Activated T-helper 1 cell treated with anti-CD3 and anti-CD28 coated beads, Interleukin-12 subunit alpha, Interleukin-12 subunit beta, Interleukin-2, Interleukin-4 antibody, amounts not matched to agents 30 ng/mL and 10 ng/mL and 1 ng/mL, durations not matched to agents 14 hours and 24 hours and 36 hours (primary cell): ENCODE measurements at regions of chr2 and their contacts with region 1.

Region 1: GRCh38 chr2:203940039-203940438 is 3.5 kb downstream of the ICOS start:
- DNase-seq: no peak
- H3K4me3 Mint-ChIP-seq: peak overlapping the region; percentile 95
- H3K27ac Mint-ChIP-seq: peak overlapping the region; percentile 93
- H3K4me1 Mint-ChIP-seq: peaks cover 69% of the 10 kb centered on the region
- H3K27me3 Mint-ChIP-seq: no peaks in the 10 kb centered on the region

Region 2: DNA sequence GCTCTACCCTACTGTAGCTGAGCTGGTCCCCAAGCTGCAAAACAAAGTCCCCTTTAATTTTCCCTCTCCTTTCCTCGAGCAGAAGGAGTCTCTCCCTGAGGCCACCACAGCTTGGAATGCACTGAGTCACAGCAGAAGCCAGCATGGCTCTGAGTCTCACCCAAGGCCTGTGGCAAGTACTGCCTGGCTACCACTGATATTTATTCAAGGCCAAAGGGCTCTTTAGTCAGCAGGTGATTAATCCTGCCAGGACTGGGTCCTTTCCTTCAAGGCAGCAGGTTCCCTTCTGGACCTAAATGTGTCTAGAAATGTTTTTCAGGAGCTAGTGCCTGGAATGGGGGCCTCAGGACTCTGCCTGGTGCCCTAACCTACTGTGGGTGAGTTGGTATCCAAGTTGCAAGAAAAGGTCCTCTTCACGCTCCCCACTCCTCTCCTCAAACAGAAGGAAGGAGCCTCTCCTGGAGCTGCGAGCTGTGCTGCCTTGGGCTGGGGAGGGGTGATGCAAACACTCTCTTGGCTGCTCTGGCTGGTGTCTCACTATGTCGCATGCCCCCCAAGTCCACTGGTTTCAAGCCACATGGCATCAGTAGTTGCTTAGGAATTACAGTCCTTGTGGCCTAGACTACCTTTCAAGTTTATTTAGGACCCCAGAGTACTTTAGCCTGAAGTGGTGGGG is 180.2 kb before region 1 on chr2:
- intact Hi-C with region 1: no loop called
- DNase-seq: no peak
- H3K4me3 Mint-ChIP-seq: no peak overlapping the region
- H3K27ac Mint-ChIP-seq: no peak overlapping the region
- H3K4me1 Mint-ChIP-seq: peaks cover 52% of the 10 kb centered on the region
- H3K27me3 Mint-ChIP-seq: no peaks in the 10 kb centered on the region

Region 3: GRCh38 chr2:204005940-204006721 is 66.1 kb after region 1 on chr2:
- intact Hi-C with region 1: loop called (anchors 1 kb)
- DNase-seq: no peak
- H3K4me3 Mint-ChIP-seq: no peak overlapping the region
- H3K27ac Mint-ChIP-seq: peak overlapping the region; percentile 85
- H3K4me1 Mint-ChIP-seq: peaks cover 91% of the 10 kb centered on the region
- H3K27me3 Mint-ChIP-seq: no peaks in the 10 kb centered on the region